GM10248 (cell line): ENCODE measurements at regions of chr12 and their contacts with region 1.

Region 1: GRCh38 chr12:47779301-47779942 is 6.4 kb downstream of the SLC48A1 start:
- DNase-seq: peak; percentile 90
- CTCF ChIP-seq: peak; percentile 96

Region 2: GRCh38 chr12:47758834-47759690 is 20.4 kb before region 1 on chr12 and contains the start of gene RAPGEF3:
- CTCF ChIA-PET with region 1: interaction called, 379 read pairs
- POLR2A ChIA-PET with region 1: no interaction called
- DNase-seq: peak; percentile 86
- CTCF ChIP-seq: peak; percentile 68

Region 3: DNA sequence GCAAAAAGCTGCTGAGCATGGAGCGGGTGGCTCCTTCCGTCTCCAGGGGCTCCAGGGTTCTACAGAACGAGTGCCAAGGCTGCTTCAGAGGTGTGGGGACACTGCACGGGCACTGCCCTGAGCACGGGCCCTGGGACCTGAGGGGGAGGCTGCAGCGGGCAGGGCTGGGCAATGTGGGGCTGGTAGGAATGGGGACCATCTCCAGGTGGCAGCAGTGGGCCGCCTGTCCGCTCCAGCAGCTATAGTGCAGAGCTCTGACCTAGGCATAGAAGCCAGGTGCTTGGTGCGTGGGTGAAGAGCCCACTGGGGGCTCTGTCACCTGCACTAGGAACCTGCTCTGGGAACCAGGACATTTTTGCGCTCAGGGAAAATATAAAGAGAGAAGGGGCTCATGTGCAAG is 18.0 kb after region 1 on chr12:
- CTCF ChIA-PET with region 1: interaction called, 23 read pairs
- POLR2A ChIA-PET with region 1: no interaction called
- DNase-seq: peak; percentile 74
- CTCF ChIP-seq: peak; percentile 57

Region 4: DNA sequence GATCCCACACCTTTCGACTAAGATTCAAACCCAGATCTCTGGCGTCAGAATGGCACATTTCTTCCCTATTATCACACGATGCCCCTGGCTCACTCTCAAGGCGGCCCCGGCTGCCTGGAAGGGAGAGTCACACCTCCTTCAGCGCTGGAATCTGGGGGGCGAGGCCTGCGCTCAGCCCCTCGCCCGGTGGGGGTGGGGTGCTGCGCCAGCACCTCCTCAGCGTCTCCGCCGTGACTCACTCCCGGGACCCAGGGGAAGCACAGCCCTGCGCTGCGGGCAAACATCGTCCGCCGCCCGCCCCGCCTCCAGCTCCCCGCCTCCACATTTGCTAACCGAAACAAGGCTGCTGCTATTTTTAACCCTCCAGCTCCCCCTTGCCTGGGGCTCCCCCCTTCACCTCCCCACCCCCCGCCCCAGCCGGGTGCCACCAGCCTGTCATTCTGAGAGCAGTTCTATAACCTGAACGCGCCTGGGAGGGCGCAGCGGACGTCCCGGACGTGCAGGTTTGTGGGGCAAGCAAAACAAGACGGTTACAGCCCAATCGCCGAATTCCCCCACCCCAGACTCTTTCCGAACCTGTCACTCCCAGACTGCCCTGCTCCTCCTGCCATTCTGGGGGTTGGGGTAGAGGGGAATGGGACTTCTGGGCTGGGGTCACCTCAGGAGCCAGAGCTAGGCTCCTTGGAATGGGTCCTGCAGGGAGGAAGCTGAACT is 33.5 kb after region 1 on chr12:
- CTCF ChIA-PET with region 1: interaction called, 10 read pairs
- POLR2A ChIA-PET with region 1: no interaction called
- DNase-seq: peak; percentile 93
- CTCF ChIP-seq: no peak